HEK293 (cell line): ENCODE measurements at regions of chr12 and their contacts with region 1.

Region 1: DNA sequence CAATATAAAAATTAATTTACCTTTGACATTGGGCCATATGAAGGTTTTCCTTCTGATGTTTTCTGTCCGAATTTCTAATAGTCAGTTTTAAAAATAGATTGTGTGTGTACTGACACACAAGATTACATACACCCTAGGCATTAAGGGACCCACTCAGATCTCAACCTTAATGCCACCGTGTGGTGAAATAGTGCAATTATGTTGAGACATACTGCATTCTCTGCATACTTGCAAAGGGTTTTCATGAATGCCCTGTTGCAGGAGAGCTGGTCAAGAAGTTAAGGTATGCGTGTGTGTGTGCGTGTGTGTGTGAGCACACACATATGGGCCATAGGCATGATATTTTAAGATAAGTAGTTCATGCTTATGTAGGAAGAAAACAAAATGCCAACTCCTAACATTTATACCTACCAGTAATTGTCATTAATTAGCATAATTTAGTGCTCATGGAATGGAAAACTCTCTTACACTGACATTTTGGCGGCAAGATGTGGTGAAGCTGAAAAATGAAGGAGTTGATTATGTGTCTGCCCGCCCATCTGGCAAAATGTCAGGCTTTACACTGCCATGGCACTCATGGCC is 58.8 kb downstream of the PIK3C2G start:
- H3K4me3 ChIP-seq: no peak overlapping the region
- H3K27ac ChIP-seq: no peak overlapping the region
- H3K4me1 ChIP-seq: no peaks in the 10 kb centered on the region
- CTCF ChIP-seq: 0 out of 2 replicates have a peak, but pooled peaks have one; percentile 24

Region 2: GRCh38 chr12:18139989-18140596 is 180.0 kb before region 1 on chr12:
- CTCF ChIA-PET with region 1: interaction called, 11 read pairs
- POLR2A ChIA-PET with region 1: no interaction called
- H3K4me3 ChIP-seq: no peak overlapping the region
- H3K27ac ChIP-seq: no peak overlapping the region
- H3K4me1 ChIP-seq: peaks cover 9% of the 10 kb centered on the region; the same call in 1 of the 2 replicates
- CTCF ChIP-seq: no peak

Region 3: DNA sequence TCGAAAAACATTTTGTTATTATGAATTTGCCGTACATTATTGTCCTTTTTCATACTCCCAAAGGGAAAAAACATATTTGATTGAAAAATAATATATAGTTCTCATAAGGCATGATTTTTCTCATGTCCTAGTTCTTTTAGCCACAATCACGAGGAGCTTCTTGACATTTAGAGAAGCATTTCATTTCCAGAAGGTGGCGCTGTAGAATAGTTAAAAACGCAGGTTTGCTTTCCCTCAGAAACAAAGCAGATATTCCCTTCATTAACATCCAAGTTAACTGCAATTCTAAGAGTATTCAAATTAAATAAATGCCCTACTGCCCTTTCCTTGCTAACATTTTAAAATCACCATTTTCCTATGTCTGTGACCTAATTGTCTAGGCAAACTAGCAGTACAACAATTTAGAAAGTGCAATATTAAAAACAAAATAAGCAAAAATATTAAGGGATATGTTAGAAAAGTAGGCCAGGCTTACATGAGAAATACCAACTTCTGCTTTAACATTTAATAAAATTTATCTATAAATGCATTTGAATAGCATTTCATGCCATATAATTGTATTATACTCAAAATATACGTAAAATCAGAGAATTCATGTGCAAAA is 69.7 kb before region 1 on chr12:
- CTCF ChIA-PET with region 1: interaction called, 47 read pairs
- POLR2A ChIA-PET with region 1: no interaction called
- H3K4me3 ChIP-seq: no peak overlapping the region
- H3K27ac ChIP-seq: no peak overlapping the region
- H3K4me1 ChIP-seq: no peaks in the 10 kb centered on the region
- CTCF ChIP-seq: no peak

Region 4: GRCh38 chr12:18304609-18305008 is 15.5 kb before region 1 on chr12:
- CTCF ChIA-PET with region 1: interaction called, 21 read pairs
- POLR2A ChIA-PET with region 1: no interaction called
- H3K4me3 ChIP-seq: no peak overlapping the region
- H3K27ac ChIP-seq: no peak overlapping the region
- H3K4me1 ChIP-seq: no peaks in the 10 kb centered on the region
- CTCF ChIP-seq: no peak

Region 5: GRCh38 chr12:18332173-18332572 is 12.0 kb after region 1 on chr12:
- CTCF ChIA-PET with region 1: interaction called, 25 read pairs
- POLR2A ChIA-PET with region 1: no interaction called
- H3K4me3 ChIP-seq: no peak overlapping the region
- H3K27ac ChIP-seq: no peak overlapping the region
- H3K4me1 ChIP-seq: no peaks in the 10 kb centered on the region
- CTCF ChIP-seq: no peak

Region 6: GRCh38 chr12:18454330-18454729 is 134.2 kb after region 1 on chr12:
- CTCF ChIA-PET with region 1: no interaction called
- POLR2A ChIA-PET with region 1: no interaction called
- H3K4me3 ChIP-seq: no peak overlapping the region
- H3K27ac ChIP-seq: no peak overlapping the region
- H3K4me1 ChIP-seq: no peaks in the 10 kb centered on the region
- CTCF ChIP-seq: no peak